Transverse colon (tissue), 4 donors: ENCODE measurements at regions of chr10 and their contacts with region 1.

Region 1: GRCh38 chr10:101959349-101959916 is 96.5 kb downstream of the ARMH3 start:
- DNase-seq: no peak
- H3K4me3 ChIP-seq: no peak overlapping the region
- H3K27ac ChIP-seq: no peak overlapping the region
- H3K4me1 ChIP-seq: no peaks in the 10 kb centered on the region
- H3K27me3 ChIP-seq: no peaks in the 10 kb centered on the region
- CTCF ChIP-seq: no peak
- EP300 ChIP-seq: no peak
- POLR2A ChIP-seq: no peak

Region 2: GRCh38 chr10:100122780-100123179 is 1836.7 kb before region 1 on chr10:
- in situ Hi-C with region 1: no loop called
- intact Hi-C with region 1: loop called (anchors 5 kb)
- DNase-seq: no peak
- H3K4me3 ChIP-seq: no peak overlapping the region
- H3K27ac ChIP-seq: no peak overlapping the region
- H3K4me1 ChIP-seq: no peaks in the 10 kb centered on the region
- H3K27me3 ChIP-seq: no peaks in the 10 kb centered on the region
- CTCF ChIP-seq: no peak
- EP300 ChIP-seq: no peak
- POLR2A ChIP-seq: no peak

Region 3: DNA sequence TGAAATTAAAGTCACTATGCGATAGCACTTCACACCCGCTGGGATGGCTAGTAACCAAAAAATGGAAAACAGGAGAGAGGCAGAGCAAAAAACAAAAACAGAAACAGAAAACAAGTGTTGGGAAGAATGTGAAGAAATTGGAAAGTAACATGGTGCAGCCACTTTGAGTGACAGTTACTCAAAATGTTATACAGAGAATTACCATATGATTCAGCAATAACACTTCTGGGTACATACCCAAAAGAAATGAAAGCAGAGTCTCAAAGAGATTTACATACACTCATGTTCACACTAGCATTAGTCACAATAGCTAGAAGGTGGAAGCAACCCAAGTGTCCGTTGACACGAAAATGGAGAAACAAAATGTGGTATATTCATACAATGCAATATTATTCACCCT is 27.2 kb before region 1 on chr10:
- in situ Hi-C with region 1: no loop called
- intact Hi-C with region 1: no loop called
- DNase-seq: no peak
- H3K4me3 ChIP-seq: no peak overlapping the region
- H3K27ac ChIP-seq: no peak overlapping the region
- H3K4me1 ChIP-seq: no peaks in the 10 kb centered on the region
- H3K27me3 ChIP-seq: no peaks in the 10 kb centered on the region
- CTCF ChIP-seq: no peak
- EP300 ChIP-seq: no peak
- POLR2A ChIP-seq: no peak